ENCODE measurements at regions of chrX and their contacts with region 1.

Region 1: DNA sequence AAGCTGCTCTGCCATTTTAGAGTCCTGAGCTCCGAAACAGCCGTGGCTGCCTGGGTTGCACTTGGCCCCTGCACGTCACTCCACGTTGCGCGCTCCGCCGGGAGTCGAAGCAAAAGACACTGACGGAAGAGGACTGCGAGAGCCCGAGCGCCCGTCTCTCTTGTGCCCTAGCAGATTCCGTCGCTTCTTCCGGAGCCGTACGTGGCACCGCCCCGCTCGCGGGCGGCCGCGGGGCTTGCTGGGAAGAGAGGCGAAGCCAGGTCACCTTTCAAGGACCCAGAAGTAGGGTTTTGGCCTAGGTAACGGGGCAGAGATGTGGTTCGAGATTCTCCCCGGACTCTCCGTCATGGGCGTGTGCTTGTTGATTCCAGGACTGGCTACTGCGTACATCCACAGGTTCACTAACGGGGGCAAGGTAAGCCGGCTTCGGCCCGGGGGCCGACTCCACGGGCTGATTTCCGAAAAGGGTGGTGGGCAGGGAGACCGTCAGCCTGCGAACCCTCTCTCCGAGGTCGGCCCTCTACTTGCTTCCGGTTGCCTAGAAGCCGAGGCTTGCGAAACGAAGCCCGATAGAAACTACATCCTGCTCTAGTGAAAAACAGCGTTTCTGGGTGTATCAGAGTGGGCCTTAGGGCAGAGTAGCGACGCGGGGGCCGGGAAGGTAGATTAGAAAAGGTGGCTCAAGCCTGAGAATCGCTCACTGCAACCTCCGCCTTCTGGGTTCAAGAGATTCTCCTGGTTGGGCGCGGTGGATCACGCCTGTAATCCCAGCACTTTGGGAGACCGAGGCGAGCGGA is at the starts of genes NDUFA1 and RNF113A:
- DNase-seq: peak; percentile 84 to 86
- H3K4me3 ChIP-seq: peak within 1 kb of the TSS; percentile 74
- H3K4me3 Mint-ChIP-seq: peak within 1 kb of the TSS; percentile 95
- H3K27ac Mint-ChIP-seq: peak within 1 kb of the TSS; percentile 96
- H3K4me1 ChIP-seq: no peaks in the 10 kb centered on the region
- H3K4me1 Mint-ChIP-seq: no peaks in the 10 kb centered on the region
- H3K27me3 ChIP-seq: no peaks in the 10 kb centered on the region
- H3K27me3 Mint-ChIP-seq: no peaks in the 10 kb centered on the region
- CTCF ChIP-seq: no peak
- total RNA-seq, gene NDUFA1: 82.6 and 83.6 TPM in 2 replicates
- total RNA-seq, gene RNF113A: 12.7 and 13.3 TPM in 2 replicates

Region 2: GRCh38 chrX:119817130-119817690 is 54.6 kb before region 1 on chrX:
- CTCF ChIA-PET with region 1: no interaction called
- POLR2A ChIA-PET with region 1: no interaction called
- intact Hi-C with region 1: no loop called
- DNase-seq: no peak
- H3K4me3 ChIP-seq: no peak overlapping the region
- H3K4me3 Mint-ChIP-seq: no peak overlapping the region
- H3K27ac Mint-ChIP-seq: no peak overlapping the region
- H3K4me1 ChIP-seq: no peaks in the 10 kb centered on the region
- H3K4me1 Mint-ChIP-seq: no peaks in the 10 kb centered on the region
- H3K27me3 ChIP-seq: no peaks in the 10 kb centered on the region
- H3K27me3 Mint-ChIP-seq: peaks cover 3% of the 10 kb centered on the region
- CTCF ChIP-seq: no peak

Region 3: DNA sequence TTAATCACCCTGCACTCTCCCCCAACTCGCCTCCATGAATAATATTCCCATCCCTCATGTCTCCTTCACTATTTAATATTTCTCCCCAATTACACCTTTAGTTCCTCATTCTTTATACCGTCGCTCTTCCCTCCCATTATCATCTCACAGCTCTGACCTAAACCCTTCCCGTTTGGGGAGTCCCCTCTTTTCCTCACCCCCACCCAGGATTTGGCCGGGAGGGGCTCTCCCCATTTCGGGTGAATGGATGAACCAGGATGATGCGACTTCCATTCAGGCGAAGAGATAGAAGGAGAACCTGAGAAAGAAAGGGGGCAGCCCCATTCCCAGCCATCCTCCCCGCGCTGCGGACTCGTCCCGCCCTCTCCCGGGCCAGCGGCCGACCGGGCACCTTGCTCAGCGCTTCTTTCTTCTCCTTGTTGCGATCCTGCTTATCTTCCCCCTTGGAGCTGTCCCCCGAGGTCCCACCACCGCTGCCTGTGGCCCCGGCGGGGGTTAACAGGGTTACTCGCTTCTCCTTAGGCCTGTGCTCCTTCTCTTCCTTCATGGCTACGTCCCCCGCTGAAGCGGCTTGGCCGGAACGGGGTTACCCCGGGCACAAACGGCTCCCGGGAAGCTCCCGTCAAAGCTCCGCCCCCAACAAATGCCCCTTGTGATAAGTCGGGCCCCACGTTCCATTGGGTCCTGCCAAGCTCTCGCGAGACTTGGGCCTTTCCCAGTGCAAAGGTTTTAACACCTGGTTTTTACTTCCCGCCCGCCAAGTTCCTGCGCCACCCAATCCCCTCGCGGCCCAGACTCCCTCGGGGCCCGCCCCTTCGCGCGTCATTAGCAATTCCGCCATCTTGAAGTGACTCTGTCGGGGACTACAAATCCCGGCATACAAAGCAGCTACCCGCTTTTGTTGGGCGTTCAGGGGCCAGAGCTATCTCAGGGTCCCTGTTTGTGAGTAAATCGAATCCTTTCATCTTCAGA is 19.1 kb before region 1 on chrX and contains the start of gene UPF3B:
- CTCF ChIA-PET with region 1: interaction called, 3 read pairs
- POLR2A ChIA-PET with region 1: interaction called, 11 read pairs
- intact Hi-C with region 1: loop called (anchors 1 kb)
- DNase-seq: peak; percentile 94 to 98
- H3K4me3 ChIP-seq: peak within 1 kb of the TSS; percentile 75
- H3K4me3 Mint-ChIP-seq: peak within 1 kb of the TSS; percentile 91
- H3K27ac Mint-ChIP-seq: peak within 1 kb of the TSS; percentile 97
- H3K4me1 ChIP-seq: no peaks in the 10 kb centered on the region
- H3K4me1 Mint-ChIP-seq: no peaks in the 10 kb centered on the region
- H3K27me3 ChIP-seq: no peaks in the 10 kb centered on the region
- H3K27me3 Mint-ChIP-seq: no peaks in the 10 kb centered on the region
- CTCF ChIP-seq: no peak
- total RNA-seq, gene UPF3B: 18.4 and 19.0 TPM in 2 replicates

Region 4: DNA sequence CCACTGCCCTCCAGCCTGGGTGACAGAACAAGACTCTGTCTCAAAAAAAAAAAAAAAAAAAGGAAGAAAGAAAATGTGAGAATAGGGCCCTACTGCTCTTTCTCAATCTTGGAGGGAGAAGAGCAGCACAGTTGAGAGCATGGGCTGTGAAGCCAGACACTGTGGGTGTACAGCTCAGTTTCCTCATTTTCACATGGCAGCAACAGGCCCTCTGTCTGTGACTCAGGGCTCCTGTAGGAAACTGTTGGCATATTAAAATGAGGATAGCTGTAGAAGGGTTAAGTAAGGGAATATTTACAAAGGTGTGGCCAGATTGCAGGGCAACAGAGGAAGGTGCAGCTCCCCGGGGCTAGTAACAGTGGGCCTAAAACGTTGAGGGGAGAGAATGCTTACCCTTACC is 27.3 kb after region 1 on chrX:
- CTCF ChIA-PET with region 1: no interaction called
- POLR2A ChIA-PET with region 1: no interaction called
- intact Hi-C with region 1: no loop called
- DNase-seq: no peak
- H3K4me3 ChIP-seq: no peak overlapping the region
- H3K4me3 Mint-ChIP-seq: no peak overlapping the region
- H3K27ac Mint-ChIP-seq: no peak overlapping the region
- H3K4me1 ChIP-seq: no peaks in the 10 kb centered on the region
- H3K4me1 Mint-ChIP-seq: no peaks in the 10 kb centered on the region
- H3K27me3 ChIP-seq: no peaks in the 10 kb centered on the region
- H3K27me3 Mint-ChIP-seq: no peaks in the 10 kb centered on the region
- CTCF ChIP-seq: no peak

Region 5: GRCh38 chrX:119916310-119916709 is 44.5 kb after region 1 on chrX:
- CTCF ChIA-PET with region 1: no interaction called
- POLR2A ChIA-PET with region 1: no interaction called
- intact Hi-C with region 1: no loop called
- DNase-seq: no peak
- H3K4me3 ChIP-seq: no peak overlapping the region
- H3K4me3 Mint-ChIP-seq: no peak overlapping the region
- H3K27ac Mint-ChIP-seq: no peak overlapping the region
- H3K4me1 ChIP-seq: no peaks in the 10 kb centered on the region
- H3K4me1 Mint-ChIP-seq: no peaks in the 10 kb centered on the region
- H3K27me3 ChIP-seq: no peaks in the 10 kb centered on the region
- H3K27me3 Mint-ChIP-seq: no peaks in the 10 kb centered on the region
- CTCF ChIP-seq: no peak